BJ (cell line): ENCODE measurements at regions of chr12 and their contacts with region 1.

Region 1: DNA sequence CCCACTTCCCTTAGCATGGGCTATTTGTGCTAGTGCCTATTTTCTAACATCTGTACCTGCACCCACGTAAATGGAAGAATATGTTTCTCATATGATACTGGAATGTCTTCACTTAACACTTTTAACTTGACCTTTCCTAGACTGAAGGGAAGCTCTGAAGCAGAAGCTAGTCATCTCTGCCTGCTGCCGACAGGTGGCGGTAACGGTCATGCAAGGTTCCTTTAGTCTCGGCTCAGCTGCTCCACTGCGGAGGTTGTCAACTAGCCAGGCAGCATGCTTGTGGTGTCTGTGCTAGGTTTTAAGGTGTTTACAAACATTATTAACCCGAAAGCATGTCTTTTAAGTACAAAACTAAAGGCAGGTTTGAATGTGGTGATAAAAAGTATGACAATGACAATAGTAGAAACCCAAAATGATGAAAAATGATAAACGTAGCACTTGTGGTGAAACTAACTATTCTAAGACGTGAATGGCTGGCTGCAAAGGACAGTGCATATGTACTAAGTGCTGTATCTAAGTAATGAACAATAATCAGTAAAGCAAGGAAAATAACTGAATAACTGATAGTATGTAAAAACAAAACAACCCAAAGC is 117.2 kb downstream of the GRIN2B start:
- DNase-seq: peak; percentile 0
- H3K4me3 ChIP-seq: no peak overlapping the region
- H3K27me3 ChIP-seq: no peaks in the 10 kb centered on the region; the same call in 1 of the 2 replicates
- CTCF ChIP-seq: peak; percentile 94

Region 2: GRCh38 chr12:13880613-13881012 is 16.4 kb after region 1 on chr12:
- CTCF ChIA-PET with region 1: interaction called, 12 read pairs
- POLR2A ChIA-PET with region 1: no interaction called
- DNase-seq: no peak
- H3K4me3 ChIP-seq: no peak overlapping the region
- H3K27me3 ChIP-seq: no peaks in the 10 kb centered on the region
- CTCF ChIP-seq: no peak

Region 3: DNA sequence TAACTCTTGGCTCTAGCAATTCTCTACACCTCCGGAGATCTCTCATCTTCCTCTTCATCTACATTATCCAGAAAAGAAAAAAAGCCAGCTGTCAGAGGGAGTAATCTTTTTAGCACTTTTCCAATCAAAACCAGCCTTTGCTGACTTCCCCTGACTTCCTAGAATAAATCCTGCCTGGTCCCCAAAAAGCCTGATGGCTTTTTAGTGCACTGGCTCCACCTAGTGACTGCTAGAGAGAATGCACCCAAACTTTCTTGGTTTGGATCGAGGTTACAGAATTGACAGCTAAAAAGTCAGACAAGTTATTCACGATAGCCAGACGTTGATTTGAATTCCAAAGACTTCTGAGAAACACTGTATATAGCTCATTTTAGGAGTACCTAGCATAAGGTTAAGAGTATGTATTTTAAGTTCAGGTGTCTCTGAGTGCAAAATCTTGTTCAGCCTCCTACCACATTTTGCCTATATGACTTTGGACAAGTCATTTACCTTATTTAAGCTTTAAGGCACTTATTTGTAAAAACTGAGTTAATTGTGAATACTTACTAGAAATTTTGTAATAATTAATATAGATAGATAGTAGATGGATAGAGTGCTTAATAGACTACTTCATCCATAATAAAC is 302.9 kb after region 1 on chr12:
- CTCF ChIA-PET with region 1: interaction called, 15 read pairs
- POLR2A ChIA-PET with region 1: no interaction called
- DNase-seq: no peak
- H3K4me3 ChIP-seq: no peak overlapping the region
- H3K27me3 ChIP-seq: no peaks in the 10 kb centered on the region
- CTCF ChIP-seq: peak; percentile 95